ENCODE measurements at regions of chr2 and their contacts with region 1.

Region 1: DNA sequence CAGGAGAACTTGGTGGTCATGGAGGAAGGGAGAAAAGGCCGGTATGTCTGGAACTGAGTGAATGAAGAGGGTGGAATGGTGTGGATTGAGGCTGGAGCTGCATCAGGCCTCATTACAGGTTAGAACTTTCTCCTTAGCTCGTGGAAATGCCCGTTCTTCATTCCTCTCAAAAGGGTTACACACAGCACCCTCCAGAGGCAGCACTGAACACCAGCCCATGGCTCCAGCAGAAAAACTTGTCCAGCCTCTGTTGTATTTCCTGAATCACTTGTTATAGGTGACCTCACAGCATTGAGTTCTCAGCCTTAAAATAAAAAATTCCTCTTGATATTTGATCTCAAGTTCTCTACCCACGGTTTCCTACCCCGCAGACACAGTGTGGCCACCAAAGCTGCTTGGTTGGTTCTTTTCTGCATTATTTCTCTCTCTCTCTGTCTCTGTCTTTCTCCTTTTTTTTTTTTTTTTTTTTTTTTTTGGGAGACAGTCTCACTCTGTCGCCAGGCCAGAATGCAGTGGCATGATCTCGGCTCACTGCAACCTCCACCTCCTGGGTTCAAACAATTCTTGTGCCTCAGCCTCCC is 89.6 kb downstream of the ITGB1BP1 start:
- DNase-seq: peak; percentile 90
- ATAC-seq: peak; percentile 84
- H3K4me3 ChIP-seq: no peak overlapping the region
- H3K27ac ChIP-seq: peak overlapping the region; percentile 12; the same call in 1 of the 2 replicates
- H3K4me1 ChIP-seq: peaks cover 38% of the 10 kb centered on the region
- H3K27me3 ChIP-seq: no peaks in the 10 kb centered on the region
- CTCF ChIP-seq: peak; percentile 87

Region 2: DNA sequence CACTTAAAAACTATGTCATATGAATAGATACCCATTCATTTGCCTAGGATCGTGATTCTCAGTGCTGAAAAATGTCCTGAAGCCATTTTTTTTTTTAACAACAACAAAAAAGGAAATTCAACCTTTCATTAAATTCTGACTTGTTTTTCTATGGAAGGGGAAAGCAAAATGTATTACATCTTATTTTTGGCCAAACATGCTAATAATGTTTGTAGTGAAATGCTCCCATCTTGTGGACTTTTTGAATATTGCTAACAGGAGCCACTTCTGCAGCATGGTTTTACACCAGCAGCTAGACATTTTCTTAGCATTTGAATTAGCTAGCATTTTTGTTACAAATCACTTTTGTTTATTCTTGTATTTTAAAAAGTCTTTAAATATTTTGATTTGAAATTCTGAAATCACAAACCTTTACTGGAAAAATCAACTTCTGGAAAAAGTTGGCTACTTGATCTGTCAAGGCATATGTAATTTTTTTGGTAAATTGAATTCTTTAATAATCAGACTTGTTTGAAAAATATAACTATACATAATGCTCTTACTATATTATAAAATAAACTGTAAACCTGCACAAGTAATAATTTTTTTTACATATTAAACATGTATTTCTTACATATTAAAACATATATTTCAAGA is 572.0 kb before region 1 on chr2:
- CTCF ChIA-PET with region 1: no interaction called
- POLR2A ChIA-PET with region 1: no interaction called
- intact Hi-C with region 1: no loop called
- DNase-seq: peak; percentile 77
- ATAC-seq: peak; percentile 50; the same call in 1 of the 2 replicates
- H3K4me3 ChIP-seq: no peak overlapping the region
- H3K27ac ChIP-seq: no peak overlapping the region
- H3K4me1 ChIP-seq: no peaks in the 10 kb centered on the region
- H3K27me3 ChIP-seq: no peaks in the 10 kb centered on the region
- CTCF ChIP-seq: peak; percentile 78

Region 3: DNA sequence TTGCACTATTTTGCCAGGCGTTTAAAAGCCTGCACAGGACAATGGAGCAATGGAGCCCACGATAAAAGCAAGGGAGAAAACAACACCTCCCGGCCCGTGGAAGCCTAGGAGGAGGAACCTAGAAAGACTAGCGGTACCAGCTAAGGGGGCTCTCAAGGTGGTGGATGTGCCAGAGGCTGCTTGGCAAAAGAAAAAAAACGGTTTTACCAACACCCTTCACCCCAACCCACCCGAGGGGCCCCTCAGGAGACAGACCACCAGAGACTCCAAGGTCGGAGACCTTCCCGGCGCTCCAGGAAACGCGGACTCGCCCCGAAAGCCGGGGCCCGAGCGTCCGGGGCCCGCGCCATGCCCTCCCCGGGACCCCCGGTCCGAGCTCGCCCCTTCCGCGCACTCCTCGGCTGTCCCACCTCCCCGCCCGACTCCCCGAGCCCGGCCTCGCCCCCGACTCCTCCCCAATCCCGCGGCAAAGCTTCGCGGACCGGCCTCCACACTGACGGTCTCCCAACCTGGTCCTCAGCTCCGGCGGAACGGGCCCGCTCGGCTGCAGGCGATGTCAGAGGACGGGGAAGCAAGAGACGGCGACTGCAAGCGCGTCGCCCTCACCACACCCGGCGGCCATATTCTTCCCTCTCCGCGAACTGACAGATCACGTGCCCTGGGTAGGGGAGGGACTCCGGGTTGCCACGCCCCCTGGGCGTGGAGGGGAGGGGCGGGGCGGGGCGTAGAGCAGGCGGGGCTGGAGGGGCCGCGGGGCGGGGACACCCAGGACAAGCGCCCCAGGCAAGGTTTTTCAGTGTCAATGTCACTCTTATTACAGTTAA is 496.5 kb before region 1 on chr2 and contains the start of gene KIDINS220:
- CTCF ChIA-PET with region 1: no interaction called
- POLR2A ChIA-PET with region 1: no interaction called
- intact Hi-C with region 1: no loop called
- DNase-seq: peak; percentile 86
- ATAC-seq: peak; percentile 83
- H3K4me3 ChIP-seq: peak within 1 kb of the TSS; percentile 82
- H3K27ac ChIP-seq: no peak within 1 kb of the TSS
- H3K4me1 ChIP-seq: peaks cover 13% of the 10 kb centered on the region
- H3K27me3 ChIP-seq: no peaks in the 10 kb centered on the region
- CTCF ChIP-seq: no peak
- total RNA-seq, gene KIDINS220: 35.3 and 37.6 TPM in 2 replicates

Region 4: DNA sequence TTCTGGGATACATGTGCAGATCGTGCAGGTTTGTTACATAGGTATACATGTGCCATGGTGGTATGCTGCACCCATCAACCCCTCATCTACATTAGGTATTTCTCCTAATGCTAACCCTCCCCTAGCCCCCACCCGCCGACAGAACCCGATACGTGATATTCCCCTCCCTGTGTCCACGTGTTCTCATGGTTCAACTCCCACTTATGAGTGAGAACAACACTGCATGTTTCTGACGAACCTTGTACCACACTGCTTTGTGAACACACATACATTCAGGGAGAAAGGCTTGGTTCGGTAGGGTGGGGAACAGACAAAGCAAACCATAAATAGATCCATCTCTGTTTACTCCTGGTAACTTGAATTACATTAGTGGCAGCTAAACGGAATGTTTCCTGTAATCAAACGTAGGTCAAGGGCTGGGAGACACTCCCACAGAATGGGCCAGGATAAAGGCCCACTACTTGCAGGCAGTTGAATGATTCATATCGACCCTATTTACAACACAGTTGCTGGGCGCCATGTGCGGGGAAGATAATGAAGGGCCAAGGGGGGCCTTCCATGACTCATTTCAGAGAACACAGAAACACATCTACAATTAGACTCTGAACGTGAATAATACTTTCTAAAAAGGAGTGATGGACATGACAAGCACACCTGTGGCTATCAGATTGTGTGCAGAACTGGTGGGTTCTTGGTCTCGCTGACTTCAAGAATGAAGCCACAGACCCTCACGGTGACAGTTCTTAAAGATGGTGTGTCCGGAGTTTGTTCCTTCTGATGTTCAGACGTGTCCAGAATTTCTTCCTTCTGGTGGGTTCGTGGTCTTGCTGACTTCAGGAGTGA is 439.5 kb before region 1 on chr2:
- CTCF ChIA-PET with region 1: no interaction called
- POLR2A ChIA-PET with region 1: no interaction called
- intact Hi-C with region 1: no loop called
- DNase-seq: no peak
- ATAC-seq: no peak
- H3K4me3 ChIP-seq: no peak overlapping the region
- H3K27ac ChIP-seq: no peak overlapping the region
- H3K4me1 ChIP-seq: no peaks in the 10 kb centered on the region
- H3K27me3 ChIP-seq: no peaks in the 10 kb centered on the region
- CTCF ChIP-seq: no peak

Region 5: DNA sequence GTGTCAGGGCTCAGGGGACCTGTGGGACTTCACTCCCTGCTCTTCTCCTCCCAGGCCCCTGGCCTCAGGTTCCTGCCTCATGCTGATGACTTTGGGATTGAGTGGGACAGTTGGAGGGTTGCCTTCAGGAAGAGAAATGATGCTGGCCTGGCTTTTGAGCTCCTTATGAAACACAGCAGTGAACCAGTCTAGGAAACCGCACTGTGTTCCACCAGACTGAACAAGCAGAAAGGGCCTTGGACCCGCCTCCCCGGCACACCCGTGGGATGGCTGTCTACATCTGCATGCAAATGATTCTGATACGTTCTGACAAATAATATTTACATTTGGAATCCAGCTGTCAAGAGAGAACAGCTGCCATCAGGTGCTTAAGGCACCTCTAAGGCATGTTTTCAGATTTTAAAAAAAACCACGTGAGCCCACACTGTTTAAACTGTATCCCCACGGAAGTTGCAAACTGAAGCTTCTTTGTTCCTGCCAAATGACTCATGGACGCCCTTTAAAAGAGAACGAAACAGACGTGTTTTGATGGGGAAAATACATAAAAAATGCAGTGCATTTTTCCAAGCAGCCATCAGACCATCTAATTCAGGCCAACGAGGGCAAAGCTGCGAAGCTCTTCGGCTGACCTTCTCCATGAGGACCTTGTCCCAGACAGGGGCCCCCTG is 154.6 kb before region 1 on chr2:
- CTCF ChIA-PET with region 1: no interaction called
- POLR2A ChIA-PET with region 1: no interaction called
- intact Hi-C with region 1: loop called (anchors 1 kb)
- DNase-seq: peak; percentile 92
- ATAC-seq: peak; percentile 64
- H3K4me3 ChIP-seq: peak overlapping the region; percentile 55
- H3K27ac ChIP-seq: peak overlapping the region; percentile 97
- H3K4me1 ChIP-seq: peaks cover 52% of the 10 kb centered on the region
- H3K27me3 ChIP-seq: no peaks in the 10 kb centered on the region
- CTCF ChIP-seq: no peak

Region 6: DNA sequence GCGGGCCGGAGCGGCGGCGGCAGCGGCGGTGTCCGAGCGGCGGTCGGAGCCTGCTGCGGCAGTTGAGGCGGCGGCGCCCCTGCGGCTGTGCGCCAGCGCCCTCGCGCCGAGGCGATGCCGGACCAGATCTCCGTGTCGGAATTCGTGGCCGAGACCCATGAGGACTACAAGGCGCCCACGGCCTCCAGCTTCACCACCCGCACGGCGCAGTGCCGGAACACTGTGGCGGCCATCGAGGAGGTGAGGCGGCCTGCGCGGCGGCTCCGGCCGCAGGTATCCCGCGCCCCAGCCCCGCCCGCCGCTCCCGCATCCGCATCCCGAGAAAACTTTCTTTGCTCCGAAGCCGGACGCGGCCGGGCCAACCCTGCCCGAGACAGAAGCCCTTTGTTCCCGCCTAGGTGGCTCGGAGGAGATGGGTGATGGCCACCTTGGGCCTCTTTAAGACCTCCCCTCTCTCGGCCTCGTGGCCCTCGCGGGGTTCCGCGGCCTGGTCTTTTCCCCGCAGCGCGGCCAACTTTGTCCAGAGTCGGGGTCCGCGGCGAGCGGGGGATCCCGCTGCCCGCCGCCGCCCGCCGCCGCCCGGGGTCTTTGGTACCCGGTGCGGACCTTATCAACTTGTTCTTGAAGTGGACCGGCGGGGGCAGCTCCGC is 126.6 kb before region 1 on chr2:
- CTCF ChIA-PET with region 1: no interaction called
- POLR2A ChIA-PET with region 1: interaction called, 10 read pairs
- intact Hi-C with region 1: loop called (anchors 1 kb)
- DNase-seq: no peak
- ATAC-seq: peak; percentile 9
- H3K4me3 ChIP-seq: peak overlapping the region; percentile 89
- H3K27ac ChIP-seq: peak overlapping the region; percentile 80
- H3K4me1 ChIP-seq: peaks cover 34% of the 10 kb centered on the region
- H3K27me3 ChIP-seq: no peaks in the 10 kb centered on the region
- CTCF ChIP-seq: no peak

Region 7: GRCh38 chr2:9251154-9252001 is 82.3 kb before region 1 on chr2:
- CTCF ChIA-PET with region 1: no interaction called
- POLR2A ChIA-PET with region 1: interaction called, 11 read pairs
- intact Hi-C with region 1: no loop called
- DNase-seq: peak; percentile 79
- ATAC-seq: peak; percentile 70
- H3K4me3 ChIP-seq: no peak overlapping the region
- H3K27ac ChIP-seq: peak overlapping the region; percentile 50
- H3K4me1 ChIP-seq: peaks cover 37% of the 10 kb centered on the region
- H3K27me3 ChIP-seq: no peaks in the 10 kb centered on the region
- CTCF ChIP-seq: no peak

Region 8: GRCh38 chr2:9440058-9440727 is 106.5 kb after region 1 on chr2:
- CTCF ChIA-PET with region 1: no interaction called
- POLR2A ChIA-PET with region 1: no interaction called
- intact Hi-C with region 1: no loop called
- DNase-seq: peak; percentile 47
- ATAC-seq: peak; percentile 46
- H3K4me3 ChIP-seq: no peak overlapping the region
- H3K27ac ChIP-seq: peak overlapping the region; percentile 48
- H3K4me1 ChIP-seq: 0 out of 2 replicates have a peak, but pooled peaks cover 4% of the 10 kb centered on the region
- H3K27me3 ChIP-seq: no peaks in the 10 kb centered on the region
- CTCF ChIP-seq: no peak

Measured in PC-3 (cell line).